WTC11 (cell line): ENCODE measurements at regions of chr18 and their contacts with region 1.

Region 1: DNA sequence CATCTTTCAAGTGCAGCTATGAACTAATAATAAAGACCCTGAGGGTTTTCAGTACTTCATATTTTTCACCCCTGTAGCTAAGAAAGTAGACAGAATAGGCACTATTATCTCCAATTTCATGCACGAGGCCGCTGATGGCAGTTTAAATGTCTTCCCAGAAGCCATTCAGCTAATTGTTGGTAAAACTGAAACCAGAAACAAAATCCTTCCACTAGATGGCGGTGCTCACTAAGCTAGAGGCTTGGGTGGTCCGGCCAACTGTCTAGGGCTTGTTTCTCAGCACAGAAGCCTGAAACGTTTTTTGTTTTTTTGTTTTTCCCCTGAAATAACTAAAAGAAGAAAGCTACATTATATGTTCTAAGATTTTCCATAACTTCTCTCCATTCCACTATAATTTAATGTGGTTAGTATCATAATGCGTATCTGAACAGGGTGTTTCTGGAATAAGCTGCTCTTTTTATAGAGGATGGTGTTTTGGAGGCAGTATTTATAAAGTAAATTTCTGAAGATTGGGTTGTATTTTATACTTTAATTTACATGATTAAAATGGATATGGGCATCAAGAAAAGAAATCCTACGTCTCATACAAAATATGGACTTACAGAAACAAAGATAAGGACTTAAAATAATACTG is 159.4 kb downstream of the PIK3C3 start:
- DNase-seq: peak; percentile 62
- ATAC-seq: peak; percentile 85
- H3K4me3 Mint-ChIP-seq: no peak overlapping the region
- H3K27ac Mint-ChIP-seq: no peak overlapping the region
- H3K4me1 Mint-ChIP-seq: peaks cover 9% of the 10 kb centered on the region
- H3K27me3 Mint-ChIP-seq: no peaks in the 10 kb centered on the region; the same call in 1 of the 2 replicates
- CTCF ChIP-seq: peak; percentile 70

Region 2: DNA sequence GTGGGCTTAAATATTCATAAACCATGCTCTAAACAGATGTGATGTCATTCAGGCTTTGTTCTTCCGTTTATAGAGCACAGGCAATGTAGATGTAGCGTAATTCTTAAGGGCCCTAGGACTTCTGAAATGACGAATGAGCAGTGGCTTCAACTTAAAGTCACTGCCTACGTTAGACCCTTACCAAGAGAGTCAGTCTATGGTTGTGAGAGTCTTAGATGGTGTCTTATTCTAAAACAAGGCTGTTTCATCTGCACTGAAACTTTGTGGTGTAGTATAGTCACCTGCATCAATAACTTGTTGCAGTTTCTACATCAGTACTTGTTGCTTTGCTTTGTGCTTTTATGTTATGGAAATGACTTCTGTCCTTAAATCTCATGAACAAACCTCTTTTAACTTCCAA is 103.4 kb before region 1 on chr18:
- CTCF ChIA-PET with region 1: no interaction called
- POLR2A ChIA-PET with region 1: no interaction called
- DNase-seq: no peak
- ATAC-seq: no peak
- H3K4me3 Mint-ChIP-seq: no peak overlapping the region
- H3K27ac Mint-ChIP-seq: no peak overlapping the region
- H3K4me1 Mint-ChIP-seq: no peaks in the 10 kb centered on the region
- H3K27me3 Mint-ChIP-seq: no peaks in the 10 kb centered on the region
- CTCF ChIP-seq: no peak

Region 3: GRCh38 chr18:42053188-42053781 is 61.1 kb before region 1 on chr18:
- CTCF ChIA-PET with region 1: interaction called, 11 read pairs
- POLR2A ChIA-PET with region 1: no interaction called
- DNase-seq: peak; percentile 52
- ATAC-seq: peak; percentile 56
- H3K4me3 Mint-ChIP-seq: no peak overlapping the region
- H3K27ac Mint-ChIP-seq: no peak overlapping the region
- H3K4me1 Mint-ChIP-seq: peaks cover 18% of the 10 kb centered on the region
- H3K27me3 Mint-ChIP-seq: no peaks in the 10 kb centered on the region
- CTCF ChIP-seq: peak; percentile 87

Region 4: GRCh38 chr18:42271647-42272414 is 157.4 kb after region 1 on chr18:
- CTCF ChIA-PET with region 1: interaction called, 12 read pairs
- POLR2A ChIA-PET with region 1: no interaction called
- DNase-seq: no peak
- ATAC-seq: no peak
- H3K4me3 Mint-ChIP-seq: no peak overlapping the region
- H3K27ac Mint-ChIP-seq: no peak overlapping the region
- H3K4me1 Mint-ChIP-seq: peaks cover 24% of the 10 kb centered on the region
- H3K27me3 Mint-ChIP-seq: no peaks in the 10 kb centered on the region
- CTCF ChIP-seq: no peak

Region 5: GRCh38 chr18:43422518-43422917 is 1308.1 kb after region 1 on chr18:
- CTCF ChIA-PET with region 1: interaction called, 26 read pairs
- POLR2A ChIA-PET with region 1: no interaction called
- DNase-seq: peak; percentile 21
- ATAC-seq: peak; percentile 87
- H3K4me3 Mint-ChIP-seq: no peak overlapping the region
- H3K27ac Mint-ChIP-seq: no peak overlapping the region
- H3K4me1 Mint-ChIP-seq: peaks cover 11% of the 10 kb centered on the region
- H3K27me3 Mint-ChIP-seq: no peaks in the 10 kb centered on the region
- CTCF ChIP-seq: no peak